ENCODE measurements at regions of chr1 and their contacts with region 1.

Region 1: DNA sequence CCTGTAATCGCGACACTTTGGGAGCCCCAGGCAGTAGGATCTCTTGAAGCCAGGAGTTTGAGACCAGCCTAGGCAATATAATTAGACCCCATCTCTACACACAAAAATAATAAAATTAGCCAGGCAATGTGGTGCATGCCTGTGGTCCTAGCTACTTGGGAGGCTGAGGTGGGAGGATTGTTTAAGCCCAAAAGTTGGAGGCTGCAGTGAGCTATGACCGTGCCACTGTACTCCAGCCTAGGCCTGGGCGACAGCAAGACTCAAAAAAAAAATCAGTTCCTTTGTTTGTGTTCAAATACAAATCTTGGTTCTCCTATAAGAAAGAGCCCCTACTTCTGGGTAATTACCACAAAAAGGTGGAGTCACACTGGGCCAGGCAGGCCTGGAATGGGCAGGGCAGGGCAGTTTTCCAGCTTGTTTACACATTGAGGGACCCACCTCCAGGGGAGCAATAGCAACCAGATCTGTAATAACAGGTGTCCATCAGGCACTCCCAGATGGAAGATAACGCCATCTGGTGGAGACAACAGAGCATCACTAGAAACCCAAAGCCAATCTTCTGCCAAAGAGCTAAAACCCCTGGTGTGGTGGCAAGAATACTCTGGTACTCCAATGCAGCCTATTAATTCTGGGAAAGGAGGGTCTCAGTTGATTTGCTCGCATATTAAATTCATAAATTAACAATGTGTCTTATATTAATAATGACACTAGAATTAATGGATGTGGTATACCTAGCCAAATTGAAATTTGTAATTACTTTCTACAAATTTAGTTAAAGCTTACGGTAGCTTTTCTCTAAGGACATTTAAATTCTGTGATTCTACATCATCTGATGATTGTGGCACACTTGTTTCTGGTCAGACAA is 13.2 kb downstream of the PPP1R15B start:
- DNase-seq: peak; percentile 81
- ATAC-seq: peak; percentile 95
- H3K4me3 ChIP-seq: no peak overlapping the region
- H3K4me3 Mint-ChIP-seq: no peak overlapping the region
- H3K27ac ChIP-seq: peak overlapping the region; percentile 46 to 59
- H3K27ac Mint-ChIP-seq: peak overlapping the region; percentile 84
- H3K4me1 ChIP-seq: peaks cover 0 to 4% of the 10 kb centered on the region in 2 donors
- H3K4me1 Mint-ChIP-seq: peaks cover 2% of the 10 kb centered on the region
- H3K27me3 ChIP-seq: no peaks in the 10 kb centered on the region
- H3K27me3 Mint-ChIP-seq: no peaks in the 10 kb centered on the region
- CTCF ChIP-seq: peak; percentile 85

Region 2: GRCh38 chr1:204162231-204163074 is 236.0 kb before region 1 on chr1:
- CTCF ChIA-PET with region 1: interaction called, 28 read pairs
- POLR2A ChIA-PET with region 1: no interaction called
- intact Hi-C with region 1: no loop called
- DNase-seq: peak; percentile 78
- ATAC-seq: peak; percentile 92
- H3K4me3 ChIP-seq: no peak overlapping the region
- H3K4me3 Mint-ChIP-seq: no peak overlapping the region
- H3K27ac ChIP-seq: no peak overlapping the region
- H3K27ac Mint-ChIP-seq: no peak overlapping the region
- H3K4me1 ChIP-seq: no peaks in the 10 kb centered on the region
- H3K4me1 Mint-ChIP-seq: no peaks in the 10 kb centered on the region
- H3K27me3 ChIP-seq: peaks cover 0 to 17% (median 3%) of the 10 kb centered on the region in 4 experiments
- H3K27me3 Mint-ChIP-seq: peaks cover 32% of the 10 kb centered on the region
- CTCF ChIP-seq: peak; percentile 98

Region 3: GRCh38 chr1:204377795-204378608 is 20.4 kb before region 1 on chr1:
- CTCF ChIA-PET with region 1: interaction called, 19 read pairs
- POLR2A ChIA-PET with region 1: no interaction called
- intact Hi-C with region 1: no loop called
- DNase-seq: peak; percentile 56
- ATAC-seq: peak; percentile 77
- H3K4me3 ChIP-seq: peak overlapping the region in 4 of 5 experiments; percentile 36 to 63 (median 58)
- H3K4me3 Mint-ChIP-seq: peak overlapping the region; percentile 87
- H3K27ac ChIP-seq: no peak overlapping the region
- H3K27ac Mint-ChIP-seq: peak overlapping the region; percentile 29
- H3K4me1 ChIP-seq: peaks cover 13 to 22% of the 10 kb centered on the region in 2 donors
- H3K4me1 Mint-ChIP-seq: peaks cover 17% of the 10 kb centered on the region
- H3K27me3 ChIP-seq: peaks cover 0 to 47% (median 17%) of the 10 kb centered on the region in 4 experiments
- H3K27me3 Mint-ChIP-seq: peaks cover 29% of the 10 kb centered on the region
- CTCF ChIP-seq: no peak

Region 4: GRCh38 chr1:204384994-204385352 is 13.5 kb before region 1 on chr1:
- CTCF ChIA-PET with region 1: interaction called, 17 read pairs
- POLR2A ChIA-PET with region 1: interaction called, 4 read pairs
- intact Hi-C with region 1: no loop called
- DNase-seq: no peak
- ATAC-seq: no peak
- H3K4me3 ChIP-seq: no peak overlapping the region
- H3K4me3 Mint-ChIP-seq: no peak overlapping the region
- H3K27ac ChIP-seq: no peak overlapping the region
- H3K27ac Mint-ChIP-seq: no peak overlapping the region
- H3K4me1 ChIP-seq: peaks cover 0 to 8% of the 10 kb centered on the region in 2 donors
- H3K4me1 Mint-ChIP-seq: peaks cover 3% of the 10 kb centered on the region
- H3K27me3 ChIP-seq: peaks cover 0 to 3% (median 0%) of the 10 kb centered on the region in 4 experiments
- H3K27me3 Mint-ChIP-seq: peaks cover 2% of the 10 kb centered on the region
- CTCF ChIP-seq: no peak

Region 5: DNA sequence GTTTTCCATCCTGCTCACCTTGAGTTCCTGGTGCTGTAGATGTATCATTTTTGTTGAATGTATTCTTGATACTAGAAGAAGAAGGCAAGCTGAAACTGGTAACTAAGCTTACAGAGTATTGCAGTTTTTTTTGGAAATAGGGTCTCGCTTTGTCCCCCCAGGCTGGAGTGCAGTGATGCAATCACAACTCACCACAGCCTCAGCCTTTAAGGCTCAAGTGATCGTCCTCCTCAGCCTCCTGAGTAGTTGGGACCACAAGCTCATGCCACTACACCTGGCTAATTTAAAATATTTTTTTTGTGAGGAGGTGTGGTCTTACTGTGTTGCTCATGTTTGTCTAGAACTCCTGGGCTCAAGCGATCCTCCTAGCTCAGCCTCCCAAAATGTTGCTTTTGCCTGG is 160.9 kb after region 1 on chr1:
- CTCF ChIA-PET with region 1: no interaction called
- POLR2A ChIA-PET with region 1: no interaction called
- intact Hi-C with region 1: no loop called
- DNase-seq: no peak
- ATAC-seq: no peak
- H3K4me3 ChIP-seq: no peak overlapping the region
- H3K4me3 Mint-ChIP-seq: no peak overlapping the region
- H3K27ac ChIP-seq: peak overlapping the region in 1 of 2 donors; percentile 19
- H3K27ac Mint-ChIP-seq: no peak overlapping the region
- H3K4me1 ChIP-seq: peaks cover 17 to 29% of the 10 kb centered on the region in 2 donors
- H3K4me1 Mint-ChIP-seq: peaks cover 51% of the 10 kb centered on the region
- H3K27me3 ChIP-seq: no peaks in the 10 kb centered on the region
- H3K27me3 Mint-ChIP-seq: no peaks in the 10 kb centered on the region
- CTCF ChIP-seq: no peak

Region 6: DNA sequence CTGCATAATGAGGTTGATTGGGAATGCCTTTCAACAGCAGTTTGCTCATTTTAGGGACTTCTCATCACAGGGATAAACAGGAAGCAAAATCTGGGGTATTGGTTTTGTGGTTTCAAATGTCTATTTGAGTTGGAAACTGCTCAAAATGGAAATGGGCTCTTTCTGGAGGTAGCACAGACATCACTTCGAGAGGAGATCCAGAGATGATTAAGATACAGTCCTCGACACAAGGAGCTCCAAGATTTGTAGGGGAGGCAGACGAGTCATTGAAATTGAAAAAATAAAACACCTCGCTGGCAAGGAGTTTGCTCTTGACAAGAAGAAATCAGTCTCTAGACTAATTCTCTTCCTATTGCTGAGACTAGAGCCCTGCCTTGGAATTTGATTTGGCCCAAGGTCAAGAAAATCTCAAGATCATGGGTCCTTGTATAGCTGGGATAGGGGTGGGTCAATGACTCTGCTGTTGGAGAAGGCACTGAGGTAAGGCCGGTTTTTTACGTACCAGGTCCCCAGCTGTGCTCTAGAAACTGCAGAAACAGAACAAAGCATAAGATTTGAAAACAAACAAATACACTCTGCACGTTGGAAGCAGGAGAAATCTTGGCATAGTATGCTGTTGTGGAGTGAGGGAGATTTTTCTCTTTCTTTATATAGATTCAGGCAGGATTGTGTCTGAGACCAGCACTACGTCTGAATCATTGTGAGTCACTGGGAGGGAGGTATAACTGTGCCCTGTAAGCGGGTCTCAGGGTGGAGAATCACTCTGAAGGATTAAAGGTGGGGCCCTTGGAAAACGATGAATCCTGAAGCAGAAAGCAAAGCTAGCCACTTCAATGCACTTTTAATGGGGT is 976.0 kb after region 1 on chr1:
- CTCF ChIA-PET with region 1: no interaction called
- POLR2A ChIA-PET with region 1: no interaction called
- intact Hi-C with region 1: no loop called
- DNase-seq: no peak
- ATAC-seq: no peak
- H3K4me3 ChIP-seq: no peak overlapping the region
- H3K4me3 Mint-ChIP-seq: no peak overlapping the region
- H3K27ac ChIP-seq: no peak overlapping the region
- H3K27ac Mint-ChIP-seq: no peak overlapping the region
- H3K4me1 ChIP-seq: no peaks in the 10 kb centered on the region
- H3K4me1 Mint-ChIP-seq: no peaks in the 10 kb centered on the region
- H3K27me3 ChIP-seq: peaks cover 0 to 13% (median 5%) of the 10 kb centered on the region in 4 experiments
- H3K27me3 Mint-ChIP-seq: peaks cover 50% of the 10 kb centered on the region
- CTCF ChIP-seq: no peak

Measured in B cell (primary cell).